ENCODE measurements at regions of chr10 and their contacts with region 1.

Region 1: DNA sequence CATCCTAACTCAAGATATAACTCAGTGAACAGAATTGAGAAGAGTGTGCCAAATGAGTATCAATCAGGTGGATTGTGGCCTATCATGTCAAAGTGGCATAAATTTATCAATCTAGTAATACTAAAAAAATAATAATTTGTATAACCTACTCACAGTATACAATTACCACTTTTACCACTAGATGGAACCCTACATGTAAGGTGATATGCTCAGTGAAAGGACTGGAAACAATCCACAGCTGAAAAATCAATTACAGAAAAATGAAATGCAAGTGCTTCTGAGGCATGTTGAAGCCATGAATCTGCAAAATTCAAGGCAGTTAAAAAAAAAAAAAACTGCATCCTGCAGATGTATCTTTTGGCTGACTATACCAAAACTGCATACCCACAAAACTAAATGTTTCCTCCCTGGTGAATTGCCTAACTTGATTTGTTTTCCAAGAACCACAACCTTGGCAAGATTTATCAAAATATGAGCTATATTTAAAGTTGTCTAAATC is 13.9 kb downstream of the ARHGAP19 start:
- DNase-seq: peak; percentile 88
- H3K4me3 ChIP-seq: no peak overlapping the region
- H3K27me3 ChIP-seq: no peaks in the 10 kb centered on the region
- CTCF ChIP-seq: peak; percentile 59

Region 2: DNA sequence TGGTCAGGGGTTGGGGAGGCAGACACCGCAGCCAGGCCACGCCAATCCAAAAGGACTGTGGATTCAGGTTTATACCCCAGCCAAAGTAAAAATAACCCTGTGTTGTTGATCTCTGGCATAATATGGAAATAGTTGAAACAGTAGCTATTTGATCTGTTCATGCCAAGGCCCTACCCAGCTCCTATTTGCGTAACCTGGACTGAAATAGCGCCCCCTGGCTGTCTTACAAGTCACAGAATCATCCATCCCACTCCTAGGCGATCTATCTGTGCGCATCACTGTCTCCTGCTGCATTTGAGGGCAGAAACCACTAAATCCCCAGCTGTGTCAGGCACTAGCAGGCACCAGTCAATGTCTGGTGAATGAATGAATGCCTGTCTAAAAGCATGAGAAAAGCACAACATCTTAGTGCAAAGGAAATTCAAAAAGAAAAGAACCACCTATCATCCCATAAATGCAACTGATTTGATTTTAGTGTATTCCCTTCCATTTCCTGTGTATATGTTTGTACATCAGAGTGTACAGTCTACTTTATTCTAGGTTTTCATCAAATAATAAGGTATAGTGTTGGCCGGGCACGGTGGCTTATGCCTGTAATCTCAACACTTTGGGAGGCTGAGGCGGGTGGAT is 252.8 kb before region 1 on chr10:
- CTCF ChIA-PET with region 1: no interaction called
- POLR2A ChIA-PET with region 1: no interaction called
- DNase-seq: no peak
- H3K4me3 ChIP-seq: no peak overlapping the region
- H3K27me3 ChIP-seq: peaks cover 10% of the 10 kb centered on the region
- CTCF ChIP-seq: peak; percentile 53

Region 3: DNA sequence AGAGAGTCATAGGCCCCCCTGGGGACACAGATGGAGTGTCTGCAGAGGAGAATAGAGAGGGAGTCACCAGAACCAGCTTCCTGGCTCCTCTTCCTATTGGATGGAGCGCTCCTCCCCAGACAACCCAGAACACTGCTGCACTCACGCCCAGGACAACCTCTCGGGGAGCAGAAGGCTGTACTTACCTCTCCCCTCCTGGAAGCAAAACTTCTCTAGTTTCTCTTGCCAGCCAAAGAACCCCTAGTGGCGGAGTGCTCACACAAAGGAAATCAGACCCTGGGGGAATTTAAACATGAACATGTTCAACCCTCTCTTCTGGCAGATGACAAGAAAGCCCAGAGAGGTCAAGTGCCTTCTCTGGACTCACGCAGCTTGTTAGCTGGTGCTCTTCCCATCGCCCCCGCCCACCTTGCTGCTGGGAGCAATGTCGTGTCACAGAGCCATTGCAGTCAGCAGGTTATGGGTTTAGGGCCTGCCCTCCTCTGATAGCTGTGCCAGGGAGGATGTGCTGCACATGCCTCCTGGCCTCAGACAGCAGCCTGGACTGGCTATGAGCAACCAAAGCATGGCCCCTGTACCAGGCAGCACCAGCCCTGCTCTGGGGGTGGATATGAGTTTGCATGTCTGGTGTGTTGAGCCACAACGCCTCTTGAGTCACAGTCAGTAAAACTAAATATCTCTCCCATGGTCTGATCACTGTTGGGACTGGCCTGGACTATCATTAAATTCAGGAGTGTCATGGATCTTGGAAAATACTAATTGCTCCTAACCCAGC is 177.2 kb before region 1 on chr10:
- CTCF ChIA-PET with region 1: no interaction called
- POLR2A ChIA-PET with region 1: no interaction called
- DNase-seq: no peak
- H3K4me3 ChIP-seq: no peak overlapping the region
- H3K27me3 ChIP-seq: peaks cover 7% of the 10 kb centered on the region
- CTCF ChIP-seq: no peak

Region 4: GRCh38 chr10:97267671-97268070 is 10.9 kb before region 1 on chr10:
- CTCF ChIA-PET with region 1: interaction called, 14 read pairs
- POLR2A ChIA-PET with region 1: no interaction called
- DNase-seq: no peak
- H3K4me3 ChIP-seq: no peak overlapping the region
- H3K27me3 ChIP-seq: no peaks in the 10 kb centered on the region
- CTCF ChIP-seq: no peak

Region 5: DNA sequence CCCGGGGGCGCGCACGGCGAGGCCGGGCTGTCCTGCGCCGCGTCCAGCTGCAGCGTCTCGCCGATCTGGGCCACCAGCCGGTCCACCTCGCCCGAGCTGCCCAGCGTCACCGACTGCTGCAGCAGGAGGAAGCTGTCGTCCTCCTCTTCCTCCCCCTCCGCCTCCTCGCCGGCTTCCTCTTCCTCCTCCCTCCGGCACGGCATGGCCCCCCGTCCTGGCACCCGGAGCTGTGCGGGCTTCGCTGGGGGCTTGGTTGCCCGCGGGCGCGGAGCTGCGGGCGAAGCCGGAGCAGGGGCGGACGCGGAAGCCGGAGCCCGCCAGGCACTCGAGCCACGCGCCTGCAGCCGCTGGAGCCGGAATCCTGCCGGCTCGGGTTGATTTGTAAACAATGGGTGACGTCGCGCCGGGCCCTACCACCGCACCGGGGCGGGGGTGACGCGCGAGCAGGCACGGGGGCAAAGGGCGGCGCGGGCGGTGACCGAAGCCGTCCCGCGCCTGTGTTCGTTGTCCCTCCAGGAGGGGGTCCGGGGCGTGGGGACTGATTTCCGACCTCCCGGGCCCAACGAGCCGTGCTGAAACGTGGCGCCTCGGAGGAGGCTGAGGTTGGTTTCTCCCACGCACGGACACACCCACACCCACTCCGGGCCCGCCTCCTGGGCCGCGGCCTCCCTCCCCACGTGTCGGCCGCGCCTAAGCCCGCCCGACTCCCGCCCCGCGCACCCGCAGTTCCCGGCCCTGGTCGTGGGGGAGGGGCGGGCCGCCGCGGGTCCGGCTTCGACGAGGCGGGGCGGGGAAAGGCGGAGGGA is 56.0 kb after region 1 on chr10 and contains the start of gene FRAT2:
- CTCF ChIA-PET with region 1: interaction called, 28 read pairs
- POLR2A ChIA-PET with region 1: no interaction called
- DNase-seq: no peak
- H3K4me3 ChIP-seq: peak within 1 kb of the TSS; percentile 76
- H3K27me3 ChIP-seq: peaks cover 10% of the 10 kb centered on the region
- CTCF ChIP-seq: no peak
- polyA plus RNA-seq, gene FRAT2: 1.8 and 2.9 TPM in 2 replicates

Region 6: DNA sequence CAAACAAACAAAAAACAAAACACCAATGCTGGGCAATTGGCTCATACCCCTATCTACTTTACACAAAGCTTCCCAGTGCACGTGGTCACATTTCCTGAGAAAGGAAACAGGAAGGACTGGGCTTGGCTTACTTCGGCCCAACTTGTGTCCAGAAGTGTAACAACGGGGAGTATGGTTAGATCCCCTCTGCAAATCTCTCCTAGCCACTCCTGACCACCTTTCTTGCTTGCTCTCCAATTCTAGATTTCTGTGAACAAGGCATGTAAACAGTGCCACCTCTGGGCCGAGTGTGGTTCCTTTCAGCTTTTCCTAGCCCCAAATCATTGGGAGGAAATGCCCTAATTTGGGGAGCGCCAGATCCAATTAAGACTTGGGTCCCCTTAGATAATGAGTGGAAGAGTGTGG is 77.0 kb after region 1 on chr10:
- CTCF ChIA-PET with region 1: interaction called, 15 read pairs
- POLR2A ChIA-PET with region 1: no interaction called
- DNase-seq: no peak
- H3K4me3 ChIP-seq: no peak overlapping the region
- H3K27me3 ChIP-seq: no peaks in the 10 kb centered on the region
- CTCF ChIP-seq: peak; percentile 44